CD4-positive, alpha-beta T cell (primary cell): ENCODE measurements at regions of chr2 and their contacts with region 1.

Region 1: GRCh38 chr2:134181210-134181609 is 72.7 kb upstream of the MGAT5 start:
- DNase-seq: peak in 13 of 14 experiments; percentile 38 to 86 (median 51)
- ATAC-seq: peak; percentile 81
- H3K4me3 ChIP-seq: no peak overlapping the region
- H3K4me3 Mint-ChIP-seq: peak overlapping the region; percentile 52
- H3K27ac ChIP-seq: peak overlapping the region in 1 of 2 donors; percentile 48
- H3K27ac Mint-ChIP-seq: peak overlapping the region; percentile 84
- H3K4me1 ChIP-seq: peaks cover 74% of the 10 kb centered on the region
- H3K4me1 Mint-ChIP-seq: peaks cover 96% of the 10 kb centered on the region
- H3K27me3 ChIP-seq: no peaks in the 10 kb centered on the region
- H3K27me3 Mint-ChIP-seq: no peaks in the 10 kb centered on the region
- CTCF ChIP-seq: peak; percentile 22

Region 2: DNA sequence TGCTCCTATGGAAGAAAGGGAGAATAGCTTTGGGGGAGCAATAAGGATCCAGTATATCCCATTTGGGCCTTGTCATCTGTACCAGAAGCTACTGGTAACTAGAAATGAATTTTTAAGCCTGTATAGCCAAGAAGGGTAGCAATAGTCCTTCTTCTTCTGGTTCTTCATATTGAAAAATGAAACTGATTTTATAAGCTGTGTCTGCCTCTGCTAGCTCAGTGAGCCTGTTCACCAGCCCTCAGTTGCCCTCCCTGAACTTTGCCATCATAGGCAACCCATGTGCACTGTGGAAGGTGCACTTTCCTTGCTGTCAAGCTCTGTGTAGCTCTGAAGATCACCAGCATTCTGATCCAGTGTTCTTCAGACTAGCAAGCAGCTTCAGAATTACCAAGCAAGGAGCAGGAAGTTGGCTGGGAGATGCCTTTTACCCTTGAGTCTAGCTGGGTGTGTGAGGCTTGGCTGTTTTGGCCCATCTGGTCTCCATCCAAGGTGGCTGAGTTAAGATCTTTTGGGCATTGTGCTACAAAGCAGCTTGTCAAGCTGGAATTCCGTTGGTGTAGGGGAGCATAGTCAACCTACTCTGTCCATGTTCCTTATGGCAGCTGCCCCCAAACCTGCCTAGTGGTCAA is 16.9 kb after region 1 on chr2:
- CTCF ChIA-PET with region 1: interaction called, 3 read pairs
- POLR2A ChIA-PET with region 1: interaction called, 12 read pairs
- intact Hi-C with region 1: no loop called
- DNase-seq: no peak
- ATAC-seq: peak; percentile 34
- H3K4me3 ChIP-seq: peak overlapping the region; percentile 8
- H3K4me3 Mint-ChIP-seq: peak overlapping the region; percentile 76
- H3K27ac ChIP-seq: no peak overlapping the region
- H3K27ac Mint-ChIP-seq: peak overlapping the region; percentile 81
- H3K4me1 ChIP-seq: peaks cover 49% of the 10 kb centered on the region
- H3K4me1 Mint-ChIP-seq: peaks cover 85% of the 10 kb centered on the region
- H3K27me3 ChIP-seq: no peaks in the 10 kb centered on the region
- H3K27me3 Mint-ChIP-seq: no peaks in the 10 kb centered on the region
- CTCF ChIP-seq: no peak